CD4-positive, alpha-beta T cell (primary cell): ENCODE measurements at regions of chr12 and their contacts with region 1.

Region 1: DNA sequence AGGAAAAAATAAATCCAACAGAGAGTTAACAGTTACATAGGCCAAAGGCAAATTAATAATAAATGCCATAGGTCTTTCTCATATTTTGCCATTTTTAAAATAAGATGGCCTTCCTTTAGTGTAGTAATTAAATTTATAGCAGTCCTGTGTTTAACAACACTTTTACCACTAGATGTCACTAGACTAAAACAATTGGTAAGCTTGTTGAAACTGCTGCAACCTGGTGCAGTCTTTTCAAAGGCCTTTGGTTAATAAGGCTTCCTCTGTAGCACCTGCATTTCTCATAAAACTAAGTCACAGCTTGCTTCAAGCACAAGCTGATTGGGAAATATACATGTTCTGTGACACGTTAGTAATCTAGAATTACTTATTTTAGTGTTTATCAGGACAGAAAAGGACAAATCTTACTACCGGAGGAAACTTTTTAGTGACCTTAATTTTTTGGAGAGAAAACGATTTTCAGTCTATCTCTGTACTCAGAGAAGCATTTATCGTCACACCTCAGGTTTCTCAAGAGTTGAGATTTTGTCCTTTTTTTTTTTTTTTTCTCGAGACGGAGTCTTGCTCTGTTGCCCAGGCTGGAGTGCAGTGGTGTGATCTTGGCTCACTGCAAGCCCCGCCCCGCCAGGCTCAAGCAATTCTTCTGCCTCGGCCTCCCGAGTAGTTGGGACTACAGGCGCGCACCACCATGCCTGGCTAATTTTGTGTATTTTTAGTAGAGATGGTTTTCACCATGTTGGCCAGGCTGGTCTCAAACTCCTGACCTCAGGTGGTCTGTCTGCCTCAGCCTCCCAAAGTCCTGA is 20.0 kb downstream of the BORCS5 start:
- DNase-seq: peak in 6 of 14 experiments; percentile 15 to 88 (median 59)
- ATAC-seq: peak; percentile 47
- H3K4me3 ChIP-seq: no peak overlapping the region
- H3K4me3 Mint-ChIP-seq: no peak overlapping the region
- H3K27ac ChIP-seq: no peak overlapping the region
- H3K27ac Mint-ChIP-seq: peak overlapping the region; percentile 62
- H3K4me1 ChIP-seq: peaks cover 20% of the 10 kb centered on the region
- H3K4me1 Mint-ChIP-seq: peaks cover 49% of the 10 kb centered on the region
- H3K27me3 ChIP-seq: no peaks in the 10 kb centered on the region
- H3K27me3 Mint-ChIP-seq: no peaks in the 10 kb centered on the region
- CTCF ChIP-seq: peak; percentile 83

Region 2: GRCh38 chr12:12467688-12468261 is 90.9 kb after region 1 on chr12:
- CTCF ChIA-PET with region 1: interaction called, 11 read pairs
- POLR2A ChIA-PET with region 1: interaction called, 12 read pairs
- intact Hi-C with region 1: no loop called
- DNase-seq: peak in 11 of 14 experiments; percentile 15 to 87 (median 51)
- ATAC-seq: peak; percentile 23
- H3K4me3 ChIP-seq: no peak overlapping the region
- H3K4me3 Mint-ChIP-seq: peak overlapping the region; percentile 40
- H3K27ac ChIP-seq: peak overlapping the region; percentile 78 to 81
- H3K27ac Mint-ChIP-seq: peak overlapping the region; percentile 98
- H3K4me1 ChIP-seq: peaks cover 69% of the 10 kb centered on the region
- H3K4me1 Mint-ChIP-seq: peaks cover 79% of the 10 kb centered on the region
- H3K27me3 ChIP-seq: no peaks in the 10 kb centered on the region
- H3K27me3 Mint-ChIP-seq: no peaks in the 10 kb centered on the region
- CTCF ChIP-seq: no peak

Region 3: GRCh38 chr12:12611512-12612306 is 234.9 kb after region 1 on chr12 and contains the start of gene CREBL2:
- CTCF ChIA-PET with region 1: interaction called, 3 read pairs
- POLR2A ChIA-PET with region 1: no interaction called
- intact Hi-C with region 1: loop called in 1 of 2 experiments (anchors 2 kb)
- DNase-seq: peak; percentile 76 to 94 (median 83)
- ATAC-seq: peak; percentile 90
- H3K4me3 ChIP-seq: peak within 1 kb of the TSS; percentile 80
- H3K4me3 Mint-ChIP-seq: peak within 1 kb of the TSS; percentile 91
- H3K27ac ChIP-seq: peak within 1 kb of the TSS; percentile 92 to 97
- H3K27ac Mint-ChIP-seq: peak within 1 kb of the TSS; percentile 98
- H3K4me1 ChIP-seq: peaks cover 49% of the 10 kb centered on the region
- H3K4me1 Mint-ChIP-seq: peaks cover 71% of the 10 kb centered on the region
- H3K27me3 ChIP-seq: no peaks in the 10 kb centered on the region
- H3K27me3 Mint-ChIP-seq: no peaks in the 10 kb centered on the region
- CTCF ChIP-seq: no peak
- total RNA-seq, gene CREBL2: 9.5 to 12.6 TPM

Region 4: DNA sequence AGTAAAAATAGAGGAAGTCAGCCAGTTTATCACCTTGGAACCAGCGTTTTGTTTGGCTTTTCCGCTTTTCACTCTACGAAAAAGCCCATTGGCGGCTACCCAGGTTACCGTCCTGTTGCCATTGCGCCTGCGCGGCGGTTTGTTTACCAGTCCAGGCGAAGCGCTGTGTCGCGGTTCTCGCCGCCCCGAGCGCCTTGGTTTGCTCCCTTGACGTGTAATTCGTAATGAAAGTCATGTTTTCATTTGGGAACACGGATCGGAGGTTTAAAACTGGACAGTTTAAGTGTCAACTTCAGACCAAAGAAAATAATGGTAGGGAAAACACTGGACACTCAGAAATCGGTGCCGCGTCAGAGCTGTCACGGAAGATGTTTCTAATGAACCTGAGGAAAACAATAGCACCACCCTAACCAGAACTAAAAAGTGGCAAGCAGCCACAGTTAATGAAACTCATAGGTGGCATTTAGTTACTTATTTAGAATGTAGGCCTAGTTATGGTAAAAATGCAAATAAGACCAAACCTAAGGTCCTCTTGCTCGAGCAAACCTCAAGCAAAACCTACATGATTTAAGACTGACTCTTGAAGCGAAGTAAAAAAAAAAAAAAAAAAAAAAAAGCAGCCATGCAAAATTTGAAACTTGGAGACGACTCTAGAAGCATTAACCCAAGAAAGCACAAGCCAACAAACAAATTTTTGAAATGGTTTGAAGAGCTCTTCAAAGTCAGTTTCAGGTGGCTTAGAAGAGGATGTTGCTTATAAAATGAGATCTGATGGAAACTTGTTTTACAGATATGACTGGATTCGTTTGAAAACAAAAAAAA is 319.9 kb after region 1 on chr12:
- CTCF ChIA-PET with region 1: no interaction called
- POLR2A ChIA-PET with region 1: interaction called, 5 read pairs
- intact Hi-C with region 1: loop called in 1 of 2 experiments (anchors 2 kb)
- DNase-seq: peak; percentile 90 to 97 (median 92)
- ATAC-seq: peak; percentile 83
- H3K4me3 ChIP-seq: peak overlapping the region; percentile 61
- H3K4me3 Mint-ChIP-seq: peak overlapping the region; percentile 94
- H3K27ac ChIP-seq: peak overlapping the region; percentile 96 to 97
- H3K27ac Mint-ChIP-seq: peak overlapping the region; percentile 100
- H3K4me1 ChIP-seq: peaks cover 7% of the 10 kb centered on the region
- H3K4me1 Mint-ChIP-seq: peaks cover 41% of the 10 kb centered on the region
- H3K27me3 ChIP-seq: no peaks in the 10 kb centered on the region
- H3K27me3 Mint-ChIP-seq: no peaks in the 10 kb centered on the region
- CTCF ChIP-seq: no peak

Region 5: GRCh38 chr12:12724661-12725545 is 348.1 kb after region 1 on chr12:
- CTCF ChIA-PET with region 1: interaction called, 5 read pairs
- POLR2A ChIA-PET with region 1: interaction called, 26 read pairs
- intact Hi-C with region 1: no loop called
- DNase-seq: peak in 11 of 14 experiments; percentile 72 to 98 (median 84)
- ATAC-seq: peak; percentile 56
- H3K4me3 ChIP-seq: peak overlapping the region; percentile 97
- H3K4me3 Mint-ChIP-seq: peak overlapping the region; percentile 98
- H3K27ac ChIP-seq: peak overlapping the region; percentile 89 to 91
- H3K27ac Mint-ChIP-seq: peak overlapping the region; percentile 95
- H3K4me1 ChIP-seq: peaks cover 37% of the 10 kb centered on the region
- H3K4me1 Mint-ChIP-seq: peaks cover 63% of the 10 kb centered on the region
- H3K27me3 ChIP-seq: no peaks in the 10 kb centered on the region
- H3K27me3 Mint-ChIP-seq: peaks cover 8% of the 10 kb centered on the region
- CTCF ChIP-seq: no peak

Region 6: DNA sequence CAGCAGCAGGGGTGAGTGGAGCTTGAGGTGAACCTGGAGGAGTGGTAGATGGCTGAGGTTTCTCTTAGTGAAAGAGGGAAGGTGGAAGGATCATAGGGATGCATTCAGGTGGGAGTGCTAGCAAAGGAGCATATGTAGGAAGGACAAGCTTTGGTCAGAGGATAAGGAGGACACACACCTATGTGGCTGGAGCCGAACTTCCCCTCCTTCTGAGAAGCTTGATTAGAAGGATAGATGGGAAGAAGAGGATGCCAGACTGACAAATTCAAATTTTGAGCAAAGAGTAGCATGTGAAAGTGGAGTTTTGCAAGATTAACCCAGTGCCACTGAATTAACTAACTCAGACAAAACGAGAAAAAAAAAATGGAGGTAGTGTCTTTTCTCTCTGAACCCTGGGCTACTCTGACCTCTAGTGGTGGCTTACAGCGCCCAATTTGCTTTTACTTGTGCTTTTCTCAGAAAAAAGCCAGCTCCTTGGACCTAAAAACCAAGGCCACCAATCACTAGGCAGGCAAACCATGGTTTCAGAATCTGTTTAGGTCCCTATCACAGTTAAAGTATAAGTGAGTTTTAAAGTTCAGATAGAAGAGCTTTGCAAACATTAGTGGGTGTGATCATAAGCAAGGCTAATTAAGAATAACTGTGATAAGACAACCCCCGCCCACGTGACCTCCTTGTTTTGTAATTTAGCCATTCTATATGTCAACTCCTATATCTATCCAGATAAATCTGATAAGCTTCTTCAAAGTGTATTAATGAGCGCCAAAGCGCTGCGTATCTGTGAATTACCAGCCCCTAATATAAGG is 835.2 kb after region 1 on chr12:
- CTCF ChIA-PET with region 1: no interaction called
- POLR2A ChIA-PET with region 1: no interaction called
- intact Hi-C with region 1: loop called in 1 of 2 experiments (anchors 5 kb)
- DNase-seq: peak; percentile 55 to 87 (median 66)
- ATAC-seq: peak; percentile 84
- H3K4me3 ChIP-seq: no peak overlapping the region
- H3K4me3 Mint-ChIP-seq: no peak overlapping the region
- H3K27ac ChIP-seq: no peak overlapping the region
- H3K27ac Mint-ChIP-seq: no peak overlapping the region
- H3K4me1 ChIP-seq: peaks cover 6% of the 10 kb centered on the region
- H3K4me1 Mint-ChIP-seq: peaks cover 7% of the 10 kb centered on the region
- H3K27me3 ChIP-seq: no peaks in the 10 kb centered on the region
- H3K27me3 Mint-ChIP-seq: no peaks in the 10 kb centered on the region
- CTCF ChIP-seq: peak; percentile 89